Left cardiac atrium (tissue), 4 donors: ENCODE measurements at regions of chr3 and their contacts with region 1.

Region 1: DNA sequence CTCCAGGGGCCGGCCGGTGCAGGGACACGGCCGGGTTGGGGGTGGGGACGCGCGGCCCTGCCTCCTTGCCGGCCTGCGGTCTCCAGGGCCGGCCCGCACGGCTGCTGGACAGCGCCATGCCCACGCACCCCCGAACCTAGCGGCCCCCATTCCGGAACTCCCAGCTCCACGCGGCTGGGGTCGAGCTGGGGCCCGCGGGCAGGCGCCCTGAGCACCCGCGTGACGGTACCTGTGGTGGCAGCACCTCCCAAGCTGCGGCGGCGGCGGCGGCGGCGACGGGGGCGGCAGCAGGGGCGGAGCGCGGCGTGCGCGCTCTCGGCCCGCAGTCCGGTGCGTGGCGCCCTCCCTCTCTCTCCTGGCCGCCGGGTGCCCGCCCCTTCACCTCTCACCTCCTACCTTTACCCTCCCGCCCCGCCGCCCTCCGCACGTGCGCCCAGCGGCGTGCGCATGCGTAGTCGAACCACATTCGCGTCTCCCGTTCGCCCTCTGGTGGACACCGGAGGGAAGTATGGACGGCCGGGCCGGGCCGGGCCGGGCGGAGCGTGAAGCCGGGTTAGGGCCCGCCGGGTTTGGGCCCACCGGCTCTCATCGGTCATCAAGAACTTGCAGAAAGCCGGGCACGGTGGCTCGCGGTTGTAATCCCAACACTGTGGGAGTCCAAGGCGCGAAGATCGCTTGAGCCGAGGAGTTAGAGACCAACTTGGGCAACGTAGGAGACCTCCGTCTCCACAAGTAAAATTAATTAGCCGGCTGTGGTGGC is at the start of gene SCAP:
- DNase-seq: peak; percentile 95
- ATAC-seq: peak; percentile 98
- total RNA-seq, gene SCAP: 41.5 to 49.1 TPM

Region 2: DNA sequence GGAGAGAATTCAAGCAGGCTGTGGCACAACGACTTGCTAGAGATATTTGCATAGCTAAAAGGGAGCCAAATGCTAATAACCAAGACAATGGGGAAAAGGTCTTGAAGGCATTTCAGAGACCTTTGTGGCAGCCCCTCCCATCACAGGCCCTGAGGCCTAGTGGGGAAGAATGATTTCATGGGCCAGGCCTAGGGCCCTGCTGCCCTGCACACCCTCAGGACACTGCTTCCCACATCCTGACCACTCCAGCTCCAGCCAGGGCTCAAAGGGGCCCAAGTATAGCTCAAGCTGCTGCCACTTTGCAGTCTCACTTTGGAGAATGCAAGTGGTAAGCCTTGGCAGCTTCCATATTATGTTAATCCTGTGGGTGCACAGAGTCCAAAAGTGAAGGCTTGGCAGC is 116.4 kb before region 1 on chr3:
- intact Hi-C with region 1: no loop called
- DNase-seq: no peak
- ATAC-seq: no peak

Region 3: DNA sequence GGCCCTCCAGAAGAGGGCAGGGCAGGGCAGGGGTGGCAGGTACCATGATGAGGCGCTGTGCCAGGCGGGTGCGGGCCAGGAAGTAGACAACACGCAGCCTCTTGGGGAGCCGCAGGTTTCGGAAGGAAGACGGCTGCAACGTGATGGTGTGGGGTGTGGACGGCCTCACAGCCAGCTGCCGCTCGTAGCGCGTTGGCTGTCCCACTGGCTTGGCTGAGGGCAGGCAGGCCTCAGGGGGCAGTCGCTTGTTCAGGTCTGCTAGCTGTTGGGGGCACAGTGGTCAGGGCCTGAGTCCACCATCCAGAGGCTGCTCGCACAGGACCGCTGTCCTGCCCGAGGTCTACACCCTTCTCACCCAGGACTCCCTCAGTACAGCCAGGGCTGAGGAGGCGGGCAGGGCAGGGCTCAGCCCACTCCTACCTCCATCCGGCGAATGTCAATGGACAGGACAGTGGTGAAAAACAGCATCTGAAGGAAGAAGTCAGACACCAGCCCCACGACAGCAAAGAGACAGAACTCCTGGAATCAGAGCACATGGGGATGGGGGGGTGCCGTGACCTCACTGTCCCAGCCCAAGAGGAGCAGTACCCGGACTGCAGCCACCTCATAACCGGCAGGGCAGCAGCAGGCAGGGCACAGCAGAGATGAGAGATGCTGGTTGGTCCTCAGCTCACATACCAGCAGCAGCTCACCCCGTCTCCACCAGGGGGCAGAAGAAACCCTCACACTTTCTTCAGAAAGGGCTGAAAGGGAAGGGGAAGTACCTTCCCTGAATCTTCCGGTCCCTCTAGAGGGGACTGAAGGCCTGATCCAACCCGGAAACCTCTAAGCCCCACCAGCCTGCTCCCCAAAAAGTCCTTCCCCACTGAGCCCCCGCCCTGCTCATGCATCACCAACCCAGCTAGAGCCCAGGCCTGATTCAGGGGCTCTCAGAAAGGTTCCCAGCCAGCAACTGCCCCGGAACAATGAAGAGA is 55.0 kb before region 1 on chr3:
- intact Hi-C with region 1: loop called (anchors 2 to 5 kb)
- DNase-seq: peak; percentile 88
- ATAC-seq: peak; percentile 74 to 90

Region 4: DNA sequence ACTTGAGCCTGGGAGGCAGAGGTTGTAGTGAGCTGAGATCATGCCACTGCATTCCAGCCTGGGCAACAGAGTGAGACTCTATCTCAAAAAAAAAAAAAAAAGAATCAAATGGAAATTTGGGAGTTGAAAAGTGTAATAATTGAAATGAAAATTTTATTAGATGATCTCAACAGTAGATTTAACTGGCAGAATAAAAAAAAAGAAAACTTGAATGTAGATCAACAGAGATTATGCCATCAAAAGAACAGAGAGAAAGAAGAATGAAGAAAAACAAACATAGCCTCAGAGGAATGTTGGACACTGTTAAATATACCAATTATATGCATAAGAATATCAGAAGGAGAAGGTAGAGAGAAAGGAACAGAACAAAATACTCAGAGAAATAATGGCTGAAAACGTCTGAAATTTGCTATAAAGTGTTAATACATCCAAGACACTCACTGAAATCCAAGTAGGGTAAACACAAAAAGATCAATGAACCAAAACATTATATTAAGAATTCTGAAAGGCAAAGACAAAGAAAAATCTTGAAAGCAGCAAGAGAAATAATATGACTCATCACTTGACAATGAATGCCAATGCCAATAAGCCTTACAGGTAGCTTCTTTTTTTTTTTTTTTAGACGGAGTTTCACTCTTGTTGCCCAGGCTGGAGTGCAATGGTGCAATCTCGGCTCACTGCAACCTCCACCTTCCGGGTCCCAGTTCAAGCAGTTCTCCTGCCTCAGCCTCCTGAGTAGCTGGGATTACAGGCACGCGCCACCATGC is 52.4 kb after region 1 on chr3:
- intact Hi-C with region 1: no loop called
- DNase-seq: no peak
- ATAC-seq: no peak